ENCODE measurements at regions of chrX and their contacts with region 1.

Region 1: DNA sequence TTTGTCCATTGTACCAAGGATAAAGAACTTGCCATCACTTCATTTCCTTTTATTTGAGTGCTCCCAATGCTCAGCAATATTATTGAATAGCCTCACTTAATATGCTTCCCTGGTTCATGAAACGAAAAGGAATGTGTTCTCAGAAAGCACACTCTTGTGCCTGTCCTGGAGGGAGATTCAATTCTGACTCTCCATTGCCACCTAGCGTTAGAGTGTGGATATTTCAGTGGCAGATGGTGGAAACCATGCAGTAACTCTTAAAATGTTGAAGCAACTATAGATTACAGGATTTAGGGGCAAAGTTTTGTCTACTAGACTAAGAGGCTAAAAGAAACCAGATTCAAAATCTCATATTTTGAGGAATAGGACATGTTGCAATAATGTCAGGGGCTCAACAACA is 36.0 kb downstream of the GAB3 start:
- DNase-seq: no peak
- H3K4me3 ChIP-seq: no peak overlapping the region
- H3K27ac ChIP-seq: no peak overlapping the region
- H3K4me1 ChIP-seq: no peaks in the 10 kb centered on the region
- H3K27me3 ChIP-seq: no peaks in the 10 kb centered on the region
- CTCF ChIP-seq: peak; percentile 28 to 71 (median 70)

Region 2: DNA sequence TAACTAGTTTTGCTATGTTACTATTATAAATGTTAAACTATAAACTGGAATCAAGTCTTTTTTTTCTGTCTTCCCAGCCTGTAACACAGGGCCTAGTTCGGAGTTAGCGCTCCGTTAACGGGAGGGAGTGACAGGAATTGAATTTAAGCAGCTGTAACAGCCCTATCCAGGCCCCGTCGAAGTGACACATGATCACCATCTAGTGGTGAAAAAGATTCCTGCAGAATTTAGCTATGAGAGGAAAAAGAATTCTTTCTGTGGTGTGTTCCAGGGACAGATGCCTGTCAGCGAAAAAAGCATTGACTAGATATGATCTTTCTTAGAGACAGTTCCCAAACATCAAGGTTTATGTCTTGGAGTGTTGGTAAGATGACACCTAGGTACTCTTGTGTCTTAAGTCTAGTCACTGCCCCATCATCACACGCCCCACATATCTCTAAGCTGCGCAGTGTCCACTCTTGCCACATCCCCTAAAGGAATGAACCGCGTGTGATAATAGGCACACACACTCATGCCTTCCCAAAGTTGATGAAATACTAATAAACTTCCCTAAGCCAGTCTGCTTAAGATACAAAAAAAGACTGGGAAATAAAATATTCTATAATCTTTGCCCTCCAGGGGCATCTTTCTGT is 33.9 kb after region 1 on chrX:
- intact Hi-C with region 1: loop called (anchors 5 kb)
- DNase-seq: no peak
- H3K4me3 ChIP-seq: peak overlapping the region in 1 of 2 donors; percentile 34
- H3K27ac ChIP-seq: peak overlapping the region in 1 of 2 donors; percentile 51
- H3K4me1 ChIP-seq: peaks cover 2 to 4% of the 10 kb centered on the region in 2 donors
- H3K27me3 ChIP-seq: no peaks in the 10 kb centered on the region
- CTCF ChIP-seq: peak in 2 of 3 experiments; percentile 68 to 72

Measured in ascending aorta (tissue), 2 donors.